Activated CD4-positive, alpha-beta T cell treated with anti-CD3 and anti-CD28 coated beads, Interleukin-2, amount 10 ng/mL, durations not matched to agents 24 days and 14 days (primary cell): ENCODE measurements at regions of chr5 and their contacts with region 1.

Region 1: GRCh38 chr5:91059409-91059808 is 323.7 kb downstream of the ARRDC3 start:
- DNase-seq: no peak
- H3K4me3 Mint-ChIP-seq: no peak overlapping the region
- H3K27ac Mint-ChIP-seq: no peak overlapping the region
- H3K4me1 Mint-ChIP-seq: peaks cover 14% of the 10 kb centered on the region
- H3K27me3 Mint-ChIP-seq: peaks cover 34% of the 10 kb centered on the region

Region 2: GRCh38 chr5:90940227-90940995 is 119.0 kb before region 1 on chr5:
- intact Hi-C with region 1: loop called (anchors 5 kb)
- DNase-seq: peak; percentile 84
- H3K4me3 Mint-ChIP-seq: no peak overlapping the region
- H3K27ac Mint-ChIP-seq: peak overlapping the region; percentile 81
- H3K4me1 Mint-ChIP-seq: peaks cover 10% of the 10 kb centered on the region
- H3K27me3 Mint-ChIP-seq: no peaks in the 10 kb centered on the region

Region 3: DNA sequence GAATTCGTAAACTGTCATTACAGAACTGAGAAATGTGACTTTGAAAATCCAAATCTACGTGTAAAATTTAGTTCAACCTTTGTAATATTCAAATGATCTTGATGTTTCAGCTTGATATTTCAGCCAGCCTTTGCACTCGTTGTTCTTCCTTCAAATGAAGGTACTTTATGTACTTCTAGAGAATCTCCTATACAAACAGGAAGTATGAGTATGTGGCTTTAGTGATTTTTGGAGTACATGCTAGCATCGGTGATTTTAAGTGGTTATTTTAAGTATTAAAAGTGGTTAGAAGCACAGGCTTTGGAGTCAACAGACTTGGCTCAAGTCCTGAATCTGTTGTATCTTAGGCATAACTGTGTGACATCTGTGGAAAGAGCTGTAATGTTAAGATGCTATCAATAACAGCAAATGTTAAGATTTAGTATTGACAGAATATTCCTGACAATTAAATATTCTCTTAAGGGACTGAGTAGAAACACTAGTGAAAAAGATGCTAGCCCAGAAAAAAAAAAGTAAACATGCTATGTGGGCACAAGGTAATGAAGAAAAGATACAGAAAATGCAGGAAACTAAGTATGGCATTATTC is 102.8 kb before region 1 on chr5:
- intact Hi-C with region 1: loop called (anchors 5 kb)
- DNase-seq: no peak
- H3K4me3 Mint-ChIP-seq: no peak overlapping the region
- H3K27ac Mint-ChIP-seq: no peak overlapping the region
- H3K4me1 Mint-ChIP-seq: peaks cover 4% of the 10 kb centered on the region
- H3K27me3 Mint-ChIP-seq: peaks cover 16% of the 10 kb centered on the region

Region 4: GRCh38 chr5:91016954-91017700 is 42.3 kb before region 1 on chr5:
- intact Hi-C with region 1: no loop called
- DNase-seq: no peak
- H3K4me3 Mint-ChIP-seq: no peak overlapping the region
- H3K27ac Mint-ChIP-seq: no peak overlapping the region
- H3K4me1 Mint-ChIP-seq: no peaks in the 10 kb centered on the region
- H3K27me3 Mint-ChIP-seq: peaks cover 7% of the 10 kb centered on the region

Region 5: DNA sequence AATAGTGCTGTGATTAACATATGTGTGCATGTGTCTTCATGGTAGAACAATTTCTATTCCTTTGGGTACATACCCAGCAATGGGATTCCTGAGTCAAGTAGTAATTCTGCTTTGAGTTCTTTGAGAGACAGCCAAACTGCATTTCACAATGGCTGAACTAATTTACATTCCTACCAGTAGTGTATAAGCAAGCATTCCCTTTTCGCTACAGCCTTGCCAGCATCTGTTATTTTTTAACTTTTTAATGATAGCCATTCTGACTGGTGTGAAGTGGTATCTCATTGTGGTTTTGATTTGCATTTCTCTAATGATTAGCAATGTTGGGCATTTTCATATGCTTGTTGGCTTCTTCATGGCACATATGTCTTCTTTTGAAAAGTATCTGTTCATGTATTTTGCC is 15.2 kb after region 1 on chr5:
- intact Hi-C with region 1: loop called (anchors 1 kb)
- DNase-seq: no peak
- H3K4me3 Mint-ChIP-seq: no peak overlapping the region
- H3K27ac Mint-ChIP-seq: no peak overlapping the region
- H3K4me1 Mint-ChIP-seq: peaks cover 6% of the 10 kb centered on the region
- H3K27me3 Mint-ChIP-seq: peaks cover 23% of the 10 kb centered on the region

Region 6: DNA sequence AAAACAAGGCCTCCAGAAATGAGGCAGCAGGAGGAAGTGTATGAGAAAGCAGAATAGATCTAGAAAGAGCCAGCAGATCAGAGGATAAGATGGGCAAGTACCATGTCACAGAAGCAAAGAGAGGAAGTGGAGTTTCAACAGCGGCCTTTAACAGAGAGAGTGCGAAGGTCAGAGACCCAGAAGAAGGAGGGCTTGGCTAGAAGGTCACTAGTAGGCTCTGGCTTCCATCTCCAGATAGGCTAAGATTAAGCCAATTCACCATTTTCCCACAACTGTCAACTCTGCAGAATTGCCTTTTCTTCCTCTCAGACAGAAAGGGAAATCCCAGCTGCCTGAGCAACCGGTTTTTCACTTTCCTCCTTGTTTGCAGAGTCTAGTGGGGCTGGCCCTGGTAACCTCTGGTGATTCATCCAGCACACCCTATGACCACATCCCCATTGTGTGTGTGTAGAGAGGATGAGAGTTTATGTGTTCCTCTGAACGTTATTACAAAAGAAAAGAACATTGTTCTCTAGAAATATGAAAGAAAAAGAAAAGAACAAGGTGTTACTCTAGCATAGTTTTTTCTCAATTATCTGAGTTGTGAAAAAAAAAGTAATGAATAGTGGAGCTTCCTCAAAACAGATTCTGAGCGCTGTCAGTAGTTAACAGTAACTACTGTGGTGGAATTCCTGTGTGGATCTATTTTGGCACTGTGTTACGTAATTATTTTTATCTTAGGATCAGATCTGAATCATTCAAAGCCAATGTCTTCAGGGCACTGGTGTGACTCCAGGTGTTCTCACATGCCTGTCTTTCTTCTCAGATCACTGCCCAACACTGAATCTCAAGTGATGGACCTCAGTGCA is 103.3 kb after region 1 on chr5:
- intact Hi-C with region 1: loop called (anchors 1 kb)
- DNase-seq: peak; percentile 90
- H3K4me3 Mint-ChIP-seq: peak overlapping the region; percentile 63
- H3K27ac Mint-ChIP-seq: peak overlapping the region; percentile 88
- H3K4me1 Mint-ChIP-seq: peaks cover 25% of the 10 kb centered on the region
- H3K27me3 Mint-ChIP-seq: peaks cover 3% of the 10 kb centered on the region

Region 7: DNA sequence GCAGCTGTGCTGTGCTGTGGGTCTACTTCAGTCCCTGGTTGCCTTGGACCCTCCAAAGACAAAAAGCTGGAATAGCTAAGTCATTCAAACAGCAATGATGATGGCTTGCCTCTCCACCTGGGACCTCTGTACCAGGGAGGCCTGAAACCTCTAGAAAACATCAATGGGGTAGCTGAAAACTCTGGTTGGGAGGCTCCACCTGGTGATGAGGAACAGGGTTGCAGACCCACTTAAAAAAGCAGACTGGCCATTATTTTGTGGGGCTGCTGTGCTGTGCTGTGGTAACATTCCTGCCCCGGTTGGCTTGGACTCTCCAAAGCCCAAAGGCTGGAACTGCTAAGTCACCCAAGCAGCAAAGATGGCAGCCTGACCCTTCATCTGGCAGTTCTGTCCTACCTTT is 1163.0 kb after region 1 on chr5:
- intact Hi-C with region 1: no loop called
- DNase-seq: no peak
- H3K4me3 Mint-ChIP-seq: no peak overlapping the region
- H3K27ac Mint-ChIP-seq: no peak overlapping the region
- H3K4me1 Mint-ChIP-seq: no peaks in the 10 kb centered on the region
- H3K27me3 Mint-ChIP-seq: no peaks in the 10 kb centered on the region